ENCODE measurements at regions of chr6 and their contacts with region 1.

Region 1: GRCh38 chr6:70547313-70547712 is 19.4 kb upstream of the SDHAF4 start:
- DNase-seq: no peak
- H3K4me3 ChIP-seq: no peak overlapping the region
- H3K27ac ChIP-seq: no peak overlapping the region
- H3K4me1 ChIP-seq: no peaks in the 10 kb centered on the region
- H3K27me3 ChIP-seq: no peaks in the 10 kb centered on the region
- CTCF ChIP-seq: peak; percentile 53

Region 2: GRCh38 chr6:70436320-70436719 is 111.0 kb before region 1 on chr6:
- CTCF ChIA-PET with region 1: no interaction called
- POLR2A ChIA-PET with region 1: no interaction called
- intact Hi-C with region 1: no loop called
- DNase-seq: no peak
- H3K4me3 ChIP-seq: no peak overlapping the region
- H3K27ac ChIP-seq: no peak overlapping the region
- H3K4me1 ChIP-seq: no peaks in the 10 kb centered on the region
- H3K27me3 ChIP-seq: no peaks in the 10 kb centered on the region
- CTCF ChIP-seq: no peak

Region 3: GRCh38 chr6:70686548-70687133 is 139.3 kb after region 1 on chr6:
- CTCF ChIA-PET with region 1: no interaction called
- POLR2A ChIA-PET with region 1: no interaction called
- intact Hi-C with region 1: loop called (anchors 1 kb)
- DNase-seq: peak in 1 of 2 experiments; percentile 40
- H3K4me3 ChIP-seq: no peak overlapping the region
- H3K27ac ChIP-seq: no peak overlapping the region
- H3K4me1 ChIP-seq: peaks cover 6% of the 10 kb centered on the region
- H3K27me3 ChIP-seq: no peaks in the 10 kb centered on the region
- CTCF ChIP-seq: peak; percentile 90